PC-3 (cell line): ENCODE measurements at regions of chr4 and their contacts with region 1.

Region 1: DNA sequence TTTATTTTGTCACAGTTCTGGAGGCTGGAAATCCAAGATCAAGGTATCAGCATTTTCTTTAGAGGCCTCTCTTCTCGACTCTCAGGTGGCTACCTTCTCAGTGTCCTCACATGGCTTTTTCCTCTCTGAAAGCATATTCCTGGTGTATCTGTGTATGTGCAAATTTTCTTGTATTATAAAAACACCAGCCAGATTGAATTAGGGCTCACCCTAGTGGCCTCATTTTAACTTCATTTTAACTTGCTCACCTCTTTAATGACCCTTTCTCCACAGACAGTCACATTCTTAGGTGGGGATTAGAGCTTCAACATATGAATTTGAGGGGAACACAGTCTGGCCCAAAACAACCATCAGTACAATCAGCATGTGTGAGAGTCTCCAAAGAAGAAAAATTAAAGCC is 542.4 kb upstream of the FAM241A start:
- DNase-seq: peak; percentile 31
- ATAC-seq: peak; percentile 76
- H3K4me3 ChIP-seq: no peak overlapping the region
- H3K27ac ChIP-seq: no peak overlapping the region
- H3K4me1 ChIP-seq: peaks cover 9% of the 10 kb centered on the region; the same call in 1 of the 2 replicates
- H3K27me3 ChIP-seq: no peaks in the 10 kb centered on the region
- CTCF ChIP-seq: peak; percentile 61

Region 2: DNA sequence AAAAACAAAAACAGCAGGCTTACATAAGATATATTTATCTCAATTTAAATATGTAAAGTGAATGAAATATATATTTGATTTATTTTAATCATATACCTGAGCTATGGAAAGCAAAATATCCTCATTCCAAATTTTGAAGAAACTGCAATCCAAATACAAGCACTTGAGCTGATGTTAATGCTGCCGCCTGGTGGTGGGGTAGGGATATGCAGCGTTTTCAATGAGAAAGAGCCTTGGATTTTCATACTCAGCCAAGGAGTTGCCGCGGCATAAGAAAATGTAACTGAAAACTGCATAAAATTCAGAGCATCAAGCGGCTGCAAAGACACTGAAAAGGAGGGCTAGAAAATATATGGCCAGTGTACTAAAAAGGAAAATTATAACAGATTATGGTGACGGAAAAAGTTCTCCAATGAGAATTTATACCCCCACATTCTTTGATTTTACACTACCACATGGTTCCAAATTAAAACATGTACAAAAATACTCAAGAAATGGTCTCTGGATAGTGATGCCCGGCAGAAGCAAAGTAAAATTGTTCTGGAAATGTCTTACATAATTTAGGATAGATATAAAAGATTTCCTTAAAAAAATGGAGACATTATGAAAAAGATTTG is 319.7 kb before region 1 on chr4:
- CTCF ChIA-PET with region 1: no interaction called
- POLR2A ChIA-PET with region 1: no interaction called
- intact Hi-C with region 1: loop called (anchors 5 kb)
- DNase-seq: peak; percentile 68
- ATAC-seq: no peak
- H3K4me3 ChIP-seq: no peak overlapping the region
- H3K27ac ChIP-seq: no peak overlapping the region
- H3K4me1 ChIP-seq: no peaks in the 10 kb centered on the region
- H3K27me3 ChIP-seq: 0 out of 2 replicates have a peak, but pooled peaks cover 4% of the 10 kb centered on the region
- CTCF ChIP-seq: peak; percentile 71

Region 3: DNA sequence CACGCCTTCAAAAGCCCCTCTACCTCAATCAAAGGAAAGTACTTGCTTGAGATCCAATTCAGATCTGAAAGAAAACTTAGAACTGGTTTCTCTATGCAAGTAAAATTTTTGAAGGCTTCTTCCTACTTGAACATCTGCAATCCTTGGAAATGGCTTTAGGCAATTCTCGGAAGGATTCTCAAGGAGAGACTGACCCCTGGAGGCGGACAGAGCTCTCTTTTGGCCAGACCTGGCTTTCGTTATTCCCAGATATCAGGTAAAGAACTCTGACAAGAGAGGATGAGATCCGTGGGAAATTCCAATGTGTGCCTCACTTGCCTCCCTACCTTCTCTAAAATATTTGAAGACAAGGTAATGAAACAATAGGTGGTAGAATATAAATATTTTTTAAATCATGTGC is 127.8 kb before region 1 on chr4:
- CTCF ChIA-PET with region 1: no interaction called
- POLR2A ChIA-PET with region 1: no interaction called
- intact Hi-C with region 1: loop called (anchors 1 kb)
- DNase-seq: peak; percentile 52
- ATAC-seq: peak; percentile 30; the same call in 1 of the 2 replicates
- H3K4me3 ChIP-seq: no peak overlapping the region
- H3K27ac ChIP-seq: 0 out of 2 replicates have a peak overlapping the region, but pooled peaks have one; percentile 32
- H3K4me1 ChIP-seq: peaks cover 6% of the 10 kb centered on the region; the same call in 1 of the 2 replicates
- H3K27me3 ChIP-seq: no peaks in the 10 kb centered on the region
- CTCF ChIP-seq: peak; percentile 60

Region 4: GRCh38 chr4:111494971-111495370 is 107.9 kb before region 1 on chr4:
- CTCF ChIA-PET with region 1: no interaction called
- POLR2A ChIA-PET with region 1: no interaction called
- intact Hi-C with region 1: loop called (anchors 5 kb)
- DNase-seq: no peak
- ATAC-seq: no peak
- H3K4me3 ChIP-seq: no peak overlapping the region
- H3K27ac ChIP-seq: no peak overlapping the region
- H3K4me1 ChIP-seq: no peaks in the 10 kb centered on the region
- H3K27me3 ChIP-seq: no peaks in the 10 kb centered on the region
- CTCF ChIP-seq: no peak

Region 5: DNA sequence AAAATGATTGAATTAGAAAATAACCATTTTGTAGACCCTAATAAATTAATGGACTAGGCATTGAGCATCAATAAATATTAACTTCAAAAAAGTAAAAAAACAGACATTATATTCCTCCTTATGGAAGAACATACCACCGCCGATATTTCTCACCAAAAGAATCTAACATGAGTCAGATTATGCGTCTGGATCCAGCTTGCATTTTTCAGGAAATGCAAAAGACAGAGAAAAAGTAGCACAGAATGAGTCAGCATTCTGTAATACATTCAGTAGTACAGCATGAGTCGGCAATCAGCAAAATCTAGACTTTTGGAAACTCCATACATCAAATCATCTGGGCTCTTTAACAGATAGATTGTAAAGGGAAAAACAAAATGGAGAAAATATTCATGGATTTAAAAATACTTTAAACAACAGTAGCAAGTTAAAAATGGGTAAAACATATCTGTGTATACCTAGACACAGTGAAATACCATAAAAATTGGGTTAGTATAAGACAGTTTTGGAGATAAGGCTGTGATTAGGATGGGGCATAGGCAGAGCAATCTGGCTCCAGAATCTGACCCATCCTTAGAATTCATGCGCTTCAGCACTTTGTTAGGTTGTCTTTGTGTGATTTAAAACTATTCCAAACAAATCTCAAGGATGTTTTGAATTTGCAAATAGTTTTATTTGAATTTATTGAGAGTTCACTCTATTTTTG is 90.6 kb before region 1 on chr4:
- CTCF ChIA-PET with region 1: no interaction called
- POLR2A ChIA-PET with region 1: no interaction called
- intact Hi-C with region 1: loop called (anchors 5 kb)
- DNase-seq: peak; percentile 86
- ATAC-seq: peak; percentile 87
- H3K4me3 ChIP-seq: no peak overlapping the region
- H3K27ac ChIP-seq: peak overlapping the region; percentile 75
- H3K4me1 ChIP-seq: peaks cover 27% of the 10 kb centered on the region
- H3K27me3 ChIP-seq: no peaks in the 10 kb centered on the region
- CTCF ChIP-seq: no peak